ENCODE measurements at regions of chr9 and their contacts with region 1.

Region 1: DNA sequence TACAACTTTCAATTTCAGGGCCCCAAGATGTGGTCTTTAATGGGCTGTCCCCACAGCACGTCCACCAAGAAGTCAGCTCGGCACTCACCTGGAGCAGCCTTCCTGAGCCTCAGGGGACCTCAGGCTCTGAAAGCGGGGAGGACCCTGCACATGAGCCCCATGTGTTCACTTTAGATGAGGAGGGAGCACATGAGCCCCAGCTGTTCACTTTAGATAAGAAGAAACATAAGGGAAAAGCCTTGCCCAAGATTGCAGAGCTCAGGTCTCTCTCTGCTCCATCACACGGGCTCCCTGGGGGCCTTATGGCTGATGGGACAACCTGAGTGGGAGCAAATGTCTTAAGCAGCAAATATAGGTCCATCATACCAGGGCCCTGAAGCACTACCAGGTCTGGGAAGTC is 56.4 kb downstream of the NIPSNAP3B start:
- DNase-seq: no peak
- H3K4me3 ChIP-seq: no peak overlapping the region
- H3K27ac ChIP-seq: no peak overlapping the region
- H3K4me1 ChIP-seq: no peaks in the 10 kb centered on the region
- H3K27me3 ChIP-seq: no peaks in the 10 kb centered on the region
- CTCF ChIP-seq: no peak
- EP300 ChIP-seq: no peak
- POLR2A ChIP-seq: no peak

Region 2: DNA sequence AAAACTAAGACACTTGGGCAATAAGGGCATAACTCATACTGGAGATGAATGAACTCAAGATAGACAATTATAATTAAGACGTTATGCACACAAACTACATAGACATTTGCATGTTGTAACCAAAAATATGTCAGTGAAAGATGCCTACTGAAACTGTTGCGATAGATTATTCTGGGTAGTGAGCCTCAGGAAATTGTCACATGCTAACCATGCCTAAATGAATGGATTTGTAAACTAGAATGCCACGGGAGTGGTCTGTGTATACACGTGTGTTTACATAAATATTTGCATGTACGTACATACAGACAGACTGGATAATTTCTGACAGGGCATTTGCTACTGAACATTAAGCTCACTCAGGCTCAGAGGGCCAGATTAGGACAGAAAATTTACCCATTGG is 55.2 kb before region 1 on chr9:
- intact Hi-C with region 1: no loop called
- DNase-seq: no peak
- H3K4me3 ChIP-seq: no peak overlapping the region
- H3K27ac ChIP-seq: no peak overlapping the region
- H3K4me1 ChIP-seq: peaks cover 3 to 11% (median 9%) of the 10 kb centered on the region in 4 donors
- H3K27me3 ChIP-seq: no peaks in the 10 kb centered on the region
- CTCF ChIP-seq: no peak
- EP300 ChIP-seq: no peak
- POLR2A ChIP-seq: no peak

Region 3: GRCh38 chr9:104787306-104788015 is 32.9 kb before region 1 on chr9:
- intact Hi-C with region 1: loop called (anchors 5 kb)
- DNase-seq: no peak
- H3K4me3 ChIP-seq: no peak overlapping the region
- H3K27ac ChIP-seq: no peak overlapping the region
- H3K4me1 ChIP-seq: no peaks in the 10 kb centered on the region
- H3K27me3 ChIP-seq: no peaks in the 10 kb centered on the region
- CTCF ChIP-seq: no peak
- EP300 ChIP-seq: no peak
- POLR2A ChIP-seq: no peak

Region 4: GRCh38 chr9:104885818-104886709 is 65.7 kb after region 1 on chr9:
- intact Hi-C with region 1: no loop called
- DNase-seq: no peak
- H3K4me3 ChIP-seq: no peak overlapping the region
- H3K27ac ChIP-seq: no peak overlapping the region
- H3K4me1 ChIP-seq: peaks cover 9 to 42% (median 30%) of the 10 kb centered on the region in 4 donors
- H3K27me3 ChIP-seq: no peaks in the 10 kb centered on the region
- CTCF ChIP-seq: no peak
- EP300 ChIP-seq: no peak
- POLR2A ChIP-seq: no peak

Measured in esophagus muscularis mucosa (tissue), 4 donors.